Heart left ventricle (tissue), 16 donors: ENCODE measurements at regions of chr6 and their contacts with region 1.

Region 1: GRCh38 chr6:21593412-21593926 is at the start of gene SOX4:
- DNase-seq: peak; percentile 93 to 97 (median 95)
- ATAC-seq: peak; percentile 77 to 90 (median 85)
- H3K4me3 ChIP-seq: peak within 1 kb of the TSS; percentile 49 to 93 (median 79)
- H3K27ac ChIP-seq: peak within 1 kb of the TSS; percentile 74 to 92 (median 90)
- H3K4me1 ChIP-seq: peaks cover 0 to 26% (median 14%) of the 10 kb centered on the region in 12 donors
- H3K27me3 ChIP-seq: no peaks in the 10 kb centered on the region
- CTCF ChIP-seq: no peak
- POLR2A ChIP-seq: peak in 1 of 2 donors; percentile 93
- total RNA-seq, gene SOX4: 1.9 to 20.3 (median 8.0) TPM

Region 2: GRCh38 chr6:20877008-20877937 is 716.2 kb before region 1 on chr6:
- intact Hi-C with region 1: loop called in 7 of 10 experiments (anchors 2 to 10 kb)
- DNase-seq: peak in 2 of 5 donors; percentile 39 to 44
- ATAC-seq: peak; percentile 51 to 92 (median 80)
- H3K4me3 ChIP-seq: no peak overlapping the region
- H3K27ac ChIP-seq: peak overlapping the region in 3 of 12 donors; percentile 21 to 69 (median 25)
- H3K4me1 ChIP-seq: peaks cover 0 to 15% (median 0%) of the 10 kb centered on the region in 12 donors
- H3K27me3 ChIP-seq: no peaks in the 10 kb centered on the region
- CTCF ChIP-seq: no peak
- POLR2A ChIP-seq: no peak

Region 3: GRCh38 chr6:21371676-21372161 is 221.8 kb before region 1 on chr6:
- intact Hi-C with region 1: loop called in 1 of 10 experiments (anchors 10 kb)
- DNase-seq: peak in 1 of 5 donors; percentile 31
- ATAC-seq: peak; percentile 42 to 79 (median 52)
- H3K4me3 ChIP-seq: no peak overlapping the region
- H3K27ac ChIP-seq: peak overlapping the region in 5 of 12 donors; percentile 13 to 54 (median 26)
- H3K4me1 ChIP-seq: peaks cover 0 to 14% (median 8%) of the 10 kb centered on the region in 12 donors
- H3K27me3 ChIP-seq: no peaks in the 10 kb centered on the region
- CTCF ChIP-seq: no peak
- POLR2A ChIP-seq: no peak

Region 4: GRCh38 chr6:21935561-21936028 is 342.1 kb after region 1 on chr6:
- intact Hi-C with region 1: loop called in 6 of 10 experiments (anchors 5 to 10 kb)
- DNase-seq: peak in 1 of 5 donors; percentile 22
- ATAC-seq: no peak
- H3K4me3 ChIP-seq: no peak overlapping the region
- H3K27ac ChIP-seq: no peak overlapping the region
- H3K4me1 ChIP-seq: no peaks in the 10 kb centered on the region
- H3K27me3 ChIP-seq: no peaks in the 10 kb centered on the region
- CTCF ChIP-seq: peak; percentile 1 to 71 (median 52)
- POLR2A ChIP-seq: no peak

Region 5: GRCh38 chr6:22145823-22146677 is 552.6 kb after region 1 on chr6:
- intact Hi-C with region 1: loop called in 9 of 10 experiments (anchors 1 to 10 kb)
- DNase-seq: peak in 2 of 5 donors; percentile 25 to 27
- ATAC-seq: peak in 2 of 4 donors; percentile 42 to 46
- H3K4me3 ChIP-seq: peak overlapping the region in 9 of 12 donors; percentile 26 to 50 (median 40)
- H3K27ac ChIP-seq: peak overlapping the region in 1 of 12 donors; percentile 30
- H3K4me1 ChIP-seq: peaks cover 0 to 75% (median 50%) of the 10 kb centered on the region in 12 donors
- H3K27me3 ChIP-seq: no peaks in the 10 kb centered on the region
- CTCF ChIP-seq: peak in 8 of 12 donors; percentile 25 to 63 (median 43)
- POLR2A ChIP-seq: no peak

Region 6: DNA sequence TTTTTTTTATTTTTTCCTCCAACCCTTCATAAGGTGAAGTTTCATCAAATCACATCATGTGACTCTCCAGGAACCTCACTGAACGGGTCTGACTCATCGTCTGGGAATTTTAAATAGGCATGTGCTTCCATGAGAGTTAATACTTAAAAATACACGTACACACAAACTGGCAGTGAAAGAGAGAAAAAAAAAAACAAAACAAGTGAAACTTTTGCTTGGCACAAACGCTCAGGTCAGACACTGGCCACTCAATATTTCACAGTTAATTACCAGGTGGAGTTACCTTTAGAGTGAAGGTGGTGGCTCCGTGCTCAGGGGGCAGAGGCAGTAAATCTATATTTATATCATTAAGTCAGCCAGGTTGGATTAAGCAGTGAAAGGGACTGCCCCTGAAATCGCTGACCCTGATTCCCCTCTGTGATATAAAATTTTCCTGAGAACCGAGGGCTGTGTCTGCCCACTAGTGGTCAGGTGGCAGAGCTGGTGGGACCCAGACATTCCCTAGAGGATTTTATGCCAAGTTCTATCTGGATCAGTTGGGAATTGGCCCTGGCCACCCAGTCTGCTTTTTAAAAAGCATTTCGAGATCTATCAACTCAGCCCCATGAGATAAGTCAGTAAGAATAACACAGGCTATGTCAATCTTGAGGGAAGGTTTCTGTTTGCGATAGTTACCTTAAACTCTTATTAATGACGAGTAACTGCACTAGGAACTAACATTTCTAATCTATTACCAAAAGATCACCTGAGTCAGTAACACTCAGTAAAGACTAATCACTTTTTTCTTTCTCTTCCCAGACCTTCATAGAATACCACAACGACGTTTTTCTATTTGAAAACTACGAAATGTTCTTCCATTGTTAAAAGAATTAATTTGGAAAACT is 1235.0 kb after region 1 on chr6:
- intact Hi-C with region 1: loop called in 5 of 10 experiments (anchors 5 to 10 kb)
- DNase-seq: peak in 2 of 5 donors; percentile 22 to 35
- ATAC-seq: peak; percentile 60 to 95 (median 82)
- H3K4me3 ChIP-seq: peak overlapping the region in 4 of 12 donors; percentile 3 to 23 (median 12)
- H3K27ac ChIP-seq: peak overlapping the region in 8 of 12 donors; percentile 15 to 67 (median 48)
- H3K4me1 ChIP-seq: peaks cover 0 to 18% (median 13%) of the 10 kb centered on the region in 12 donors
- H3K27me3 ChIP-seq: no peaks in the 10 kb centered on the region
- CTCF ChIP-seq: peak; percentile 29 to 71 (median 58)
- POLR2A ChIP-seq: no peak